Dorsolateral prefrontal cortex (tissue), 120 donors: ENCODE measurements at regions of chr15 and their contacts with region 1.

Region 1: DNA sequence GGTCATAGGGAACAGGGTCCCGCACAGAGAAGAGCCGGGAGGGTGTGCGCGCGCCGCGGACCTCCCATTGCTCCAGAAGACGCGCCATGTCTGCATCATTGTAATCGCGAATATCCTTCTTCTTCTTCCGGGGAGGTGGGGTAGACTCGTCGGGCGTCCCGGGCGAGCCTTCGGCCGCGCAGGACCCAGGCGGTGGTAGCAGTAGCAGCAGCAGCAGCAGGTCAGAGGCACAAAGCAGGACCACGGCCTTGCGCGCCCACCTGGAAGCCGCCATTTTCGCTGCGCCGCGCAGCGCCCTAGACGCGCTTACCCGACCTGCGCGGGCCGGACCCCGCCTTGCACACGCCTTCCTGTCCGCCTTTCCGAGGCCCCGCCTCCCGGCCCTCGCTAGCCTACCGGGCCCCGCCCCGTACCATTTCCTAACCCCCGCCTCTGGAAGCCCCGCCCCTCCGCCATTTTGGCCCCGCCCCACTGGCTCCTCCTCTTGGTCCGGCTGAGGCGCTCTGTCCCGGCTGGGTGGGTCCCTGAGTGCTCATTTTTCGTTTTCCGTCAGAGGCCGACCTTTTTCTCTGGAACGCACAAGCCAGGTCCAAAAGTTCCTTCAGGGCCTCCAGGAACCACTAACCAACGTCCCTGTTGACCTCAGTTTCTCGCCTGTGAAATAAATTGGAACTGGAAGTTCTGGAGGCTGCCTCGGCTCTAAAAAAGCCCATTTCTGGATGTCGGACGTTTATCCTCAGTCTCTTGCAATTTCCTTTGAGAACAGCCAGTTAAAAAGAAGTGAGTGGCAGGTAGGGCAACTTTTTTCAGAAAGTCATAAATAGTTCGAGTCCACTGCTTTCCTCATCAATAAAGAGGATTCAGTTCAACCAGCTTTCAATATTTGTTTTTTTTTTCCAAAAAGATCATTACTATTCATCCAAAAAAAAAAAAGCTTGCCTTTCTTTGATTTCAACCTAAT is at the start of gene MESD:
- DNase-seq: peak; percentile 95 to 99 (median 97)
- H3K4me3 ChIP-seq: peak within 1 kb of the TSS; percentile 57 to 99 (median 92)
- H3K27ac ChIP-seq: peak within 1 kb of the TSS; percentile 72 to 96 (median 91)
- H3K27me3 ChIP-seq: no peaks in the 10 kb centered on the region
- CTCF ChIP-seq: peak in 28 of 56 donors; percentile 7 to 65 (median 24)
- total RNA-seq, gene MESD: 16.9 to 41.5 (median 21.8) TPM

Region 2: DNA sequence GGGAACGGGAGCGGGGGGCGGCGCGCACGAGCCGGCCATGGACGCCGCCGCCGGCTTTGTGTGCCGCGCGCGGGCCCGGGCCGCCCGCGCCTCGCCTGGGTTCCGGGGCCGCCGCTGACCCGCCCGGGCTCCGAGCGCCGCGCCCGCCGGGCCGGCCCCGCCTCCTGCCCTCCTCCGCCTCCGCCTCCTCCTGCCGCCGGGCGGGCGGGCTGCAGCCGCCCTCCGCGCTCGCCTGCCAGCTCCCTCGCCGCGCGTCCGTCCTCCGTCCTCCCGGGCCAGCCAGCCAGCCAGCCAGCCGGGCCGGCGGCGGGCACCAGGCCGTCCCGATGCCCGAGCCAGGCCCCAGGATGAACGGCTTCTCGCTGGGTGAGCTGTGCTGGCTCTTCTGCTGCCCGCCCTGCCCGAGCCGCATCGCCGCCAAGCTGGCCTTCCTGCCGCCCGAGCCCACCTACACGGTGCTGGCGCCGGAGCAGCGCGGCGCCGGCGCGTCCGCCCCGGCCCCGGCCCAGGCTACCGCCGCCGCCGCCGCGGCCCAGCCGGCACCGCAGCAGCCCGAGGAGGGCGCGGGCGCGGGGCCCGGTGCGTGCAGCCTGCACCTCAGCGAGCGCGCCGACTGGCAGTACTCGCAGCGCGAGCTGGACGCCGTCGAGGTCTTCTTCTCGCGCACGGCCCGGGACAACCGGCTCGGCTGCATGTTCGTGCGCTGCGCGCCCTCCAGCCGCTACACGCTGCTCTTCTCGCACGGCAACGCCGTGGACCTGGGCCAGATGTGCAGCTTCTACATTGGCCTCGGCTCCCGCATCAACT is 294.5 kb before region 1 on chr15 and contains the start of gene ABHD17C:
- intact Hi-C with region 1: loop called in 1 of 2 experiments (anchors 10 kb)
- DNase-seq: peak in 9 of 10 donors; percentile 26 to 78 (median 40)
- H3K4me3 ChIP-seq: peak within 1 kb of the TSS; percentile 59 to 91 (median 79)
- H3K27ac ChIP-seq: peak within 1 kb of the TSS in 52 of 59 donors; percentile 22 to 89 (median 74)
- H3K27me3 ChIP-seq: no peaks in the 10 kb centered on the region
- CTCF ChIP-seq: no peak
- total RNA-seq, gene ABHD17C: 14.5 to 33.2 (median 21.2) TPM

Region 3: GRCh38 chr15:80825376-80826015 is 164.3 kb before region 1 on chr15:
- intact Hi-C with region 1: no loop called
- DNase-seq: peak in 1 of 10 donors; percentile 70
- H3K4me3 ChIP-seq: no peak overlapping the region
- H3K27ac ChIP-seq: peak overlapping the region in 5 of 59 donors; percentile 6 to 30 (median 20)
- H3K27me3 ChIP-seq: no peaks in the 10 kb centered on the region
- CTCF ChIP-seq: no peak

Region 4: GRCh38 chr15:80970018-80970658 is 19.7 kb before region 1 on chr15:
- intact Hi-C with region 1: no loop called
- DNase-seq: peak in 6 of 10 donors; percentile 51 to 80 (median 67)
- H3K4me3 ChIP-seq: no peak overlapping the region
- H3K27ac ChIP-seq: no peak overlapping the region
- H3K27me3 ChIP-seq: no peaks in the 10 kb centered on the region
- CTCF ChIP-seq: peak; percentile 80 to 98 (median 92)

Region 5: DNA sequence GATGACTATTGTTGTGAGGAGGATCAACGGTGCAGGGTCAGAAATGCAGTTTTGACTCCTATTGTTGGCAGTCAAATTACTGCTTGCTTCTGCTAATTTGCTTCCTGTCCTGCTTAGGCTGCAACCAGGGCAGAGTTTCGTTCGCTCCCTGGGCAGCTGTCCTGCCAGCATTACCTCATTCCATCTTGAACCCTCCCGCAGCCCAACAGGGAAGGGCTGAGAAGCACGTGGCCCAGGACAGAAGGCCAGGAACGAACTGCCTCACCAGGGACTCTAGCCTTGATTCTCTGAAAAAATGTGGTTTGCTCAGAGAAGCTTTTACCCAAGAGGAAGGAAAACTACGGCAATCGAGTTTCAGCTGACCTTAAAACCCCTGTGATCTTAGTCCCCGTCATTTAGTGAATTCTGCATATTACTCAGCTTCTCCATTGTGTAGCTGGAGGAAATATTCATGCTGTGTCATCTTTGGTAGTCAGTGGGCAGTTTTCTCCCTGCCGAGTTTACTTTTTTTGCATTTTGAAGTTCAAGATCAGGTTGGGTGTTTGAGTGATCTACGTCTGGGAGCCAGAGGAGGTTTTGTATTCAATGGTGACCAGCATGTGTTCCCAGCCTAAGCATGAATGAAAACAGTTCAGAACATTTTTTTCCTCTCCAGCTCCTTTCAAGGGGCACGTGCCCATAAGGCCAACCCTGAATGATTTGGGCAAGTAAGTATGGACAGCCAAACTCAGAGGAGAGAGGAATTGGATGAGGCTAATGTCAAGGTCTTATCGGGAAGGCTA is 33.9 kb after region 1 on chr15:
- intact Hi-C with region 1: loop called in 1 of 2 experiments (anchors 1 kb)
- DNase-seq: peak in 8 of 10 donors; percentile 52 to 76 (median 62)
- H3K4me3 ChIP-seq: peak overlapping the region in 32 of 59 donors; percentile 1 to 41 (median 12)
- H3K27ac ChIP-seq: peak overlapping the region in 50 of 59 donors; percentile 11 to 85 (median 64)
- H3K27me3 ChIP-seq: no peaks in the 10 kb centered on the region
- CTCF ChIP-seq: no peak

Region 6: GRCh38 chr15:81265944-81266775 is 276.4 kb after region 1 on chr15:
- intact Hi-C with region 1: loop called (anchors 5 kb)
- DNase-seq: peak; percentile 71 to 88 (median 83)
- H3K4me3 ChIP-seq: peak overlapping the region in 27 of 59 donors; percentile 0 to 46 (median 22)
- H3K27ac ChIP-seq: no peak overlapping the region
- H3K27me3 ChIP-seq: peaks cover 0 to 5% (median 0%) of the 10 kb centered on the region in 45 donors
- CTCF ChIP-seq: peak; percentile 63 to 92 (median 80)

Region 7: DNA sequence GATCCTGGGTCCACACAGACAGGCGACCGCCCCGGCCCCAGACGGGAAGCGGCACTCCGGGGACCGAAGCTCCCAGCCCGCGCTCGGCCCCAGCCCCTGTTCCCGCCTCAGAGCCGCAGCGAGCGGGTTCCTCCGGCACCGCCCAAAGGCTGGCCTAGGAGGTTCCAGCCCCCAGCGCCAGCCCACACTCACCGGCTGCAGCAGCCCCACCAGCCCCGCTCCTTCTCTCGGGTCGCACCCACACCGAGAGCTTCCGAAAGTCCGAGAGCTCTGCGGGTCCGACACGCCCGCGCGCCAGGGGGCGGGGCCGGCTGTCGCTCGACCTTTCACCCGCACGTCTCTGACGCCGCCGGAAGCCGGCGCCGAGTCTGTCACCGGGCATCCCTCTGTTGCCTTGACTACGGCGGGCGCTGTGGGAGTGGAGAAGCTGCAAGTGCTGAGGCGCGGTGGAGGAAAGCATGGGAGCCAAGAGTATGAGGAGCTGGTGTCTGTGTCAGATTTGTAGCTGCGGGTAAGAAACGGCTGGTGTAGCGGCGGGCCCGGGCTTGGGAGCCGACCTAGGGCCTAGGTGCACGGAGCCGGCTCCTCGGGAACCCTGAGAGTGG is 1272.7 kb after region 1 on chr15 and contains the starts of genes EFL1 and SAXO2:
- intact Hi-C with region 1: loop called in 1 of 2 experiments (anchors 10 kb)
- DNase-seq: peak; percentile 87 to 96 (median 94)
- H3K4me3 ChIP-seq: peak within 1 kb of the TSS; percentile 68 to 98 (median 90)
- H3K27ac ChIP-seq: peak within 1 kb of the TSS in 38 of 59 donors; percentile 7 to 85 (median 56)
- H3K27me3 ChIP-seq: no peaks in the 10 kb centered on the region
- CTCF ChIP-seq: peak in 27 of 56 donors; percentile 6 to 53 (median 26)
- total RNA-seq, gene EFL1: 8.0 to 23.4 (median 13.5) TPM
- total RNA-seq, gene SAXO2: 4.5 to 26.3 (median 9.9) TPM